Activated naive CD8-positive, alpha-beta T cell treated with anti-CD3 and anti-CD28 coated beads, Interleukin-2, amount 10 ng/mL, durations not matched to agents 7 days and 5 days (primary cell): ENCODE measurements at regions of chr5 and their contacts with region 1.

Region 1: GRCh38 chr5:151223469-151224264 is at the start of gene CCDC69:
- DNase-seq: peak; percentile 76
- ATAC-seq: peak; percentile 64
- H3K4me3 Mint-ChIP-seq: peak within 1 kb of the TSS; percentile 83
- H3K27ac Mint-ChIP-seq: peak within 1 kb of the TSS; percentile 82
- H3K4me1 Mint-ChIP-seq: peaks cover 45% of the 10 kb centered on the region
- H3K27me3 Mint-ChIP-seq: no peaks in the 10 kb centered on the region
- total RNA-seq, gene CCDC69: 108 to 110 TPM

Region 2: DNA sequence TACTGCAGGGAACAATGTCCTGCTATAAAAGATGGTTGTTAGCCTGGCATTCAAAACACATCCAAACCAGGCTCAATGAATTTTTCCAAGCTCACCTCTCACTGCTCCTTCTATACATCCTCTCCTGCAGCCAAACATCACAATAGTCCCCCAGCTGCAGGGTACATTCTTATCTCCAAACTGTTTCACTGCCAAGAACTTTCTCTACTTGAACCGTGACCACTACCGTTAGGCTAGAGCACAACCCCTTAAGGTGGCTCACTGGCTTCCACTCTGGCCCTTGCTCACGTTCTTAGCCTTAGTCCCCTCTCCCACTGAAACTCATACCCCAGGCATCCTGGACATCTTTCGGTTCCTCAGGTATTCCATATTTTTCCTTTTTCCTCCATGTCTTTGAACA is 37.1 kb before region 1 on chr5:
- POLR2A ChIA-PET with region 1: no interaction called
- DNase-seq: no peak
- ATAC-seq: no peak
- H3K4me3 Mint-ChIP-seq: no peak overlapping the region
- H3K27ac Mint-ChIP-seq: no peak overlapping the region
- H3K4me1 Mint-ChIP-seq: peaks cover 13% of the 10 kb centered on the region
- H3K27me3 Mint-ChIP-seq: no peaks in the 10 kb centered on the region

Region 3: GRCh38 chr5:151239237-151239861 is 15.7 kb after region 1 on chr5:
- POLR2A ChIA-PET with region 1: interaction called, 46 read pairs
- DNase-seq: peak; percentile 75
- ATAC-seq: peak; percentile 66
- H3K4me3 Mint-ChIP-seq: peak overlapping the region; percentile 68
- H3K27ac Mint-ChIP-seq: peak overlapping the region; percentile 76
- H3K4me1 Mint-ChIP-seq: peaks cover 32% of the 10 kb centered on the region
- H3K27me3 Mint-ChIP-seq: no peaks in the 10 kb centered on the region

Region 4: DNA sequence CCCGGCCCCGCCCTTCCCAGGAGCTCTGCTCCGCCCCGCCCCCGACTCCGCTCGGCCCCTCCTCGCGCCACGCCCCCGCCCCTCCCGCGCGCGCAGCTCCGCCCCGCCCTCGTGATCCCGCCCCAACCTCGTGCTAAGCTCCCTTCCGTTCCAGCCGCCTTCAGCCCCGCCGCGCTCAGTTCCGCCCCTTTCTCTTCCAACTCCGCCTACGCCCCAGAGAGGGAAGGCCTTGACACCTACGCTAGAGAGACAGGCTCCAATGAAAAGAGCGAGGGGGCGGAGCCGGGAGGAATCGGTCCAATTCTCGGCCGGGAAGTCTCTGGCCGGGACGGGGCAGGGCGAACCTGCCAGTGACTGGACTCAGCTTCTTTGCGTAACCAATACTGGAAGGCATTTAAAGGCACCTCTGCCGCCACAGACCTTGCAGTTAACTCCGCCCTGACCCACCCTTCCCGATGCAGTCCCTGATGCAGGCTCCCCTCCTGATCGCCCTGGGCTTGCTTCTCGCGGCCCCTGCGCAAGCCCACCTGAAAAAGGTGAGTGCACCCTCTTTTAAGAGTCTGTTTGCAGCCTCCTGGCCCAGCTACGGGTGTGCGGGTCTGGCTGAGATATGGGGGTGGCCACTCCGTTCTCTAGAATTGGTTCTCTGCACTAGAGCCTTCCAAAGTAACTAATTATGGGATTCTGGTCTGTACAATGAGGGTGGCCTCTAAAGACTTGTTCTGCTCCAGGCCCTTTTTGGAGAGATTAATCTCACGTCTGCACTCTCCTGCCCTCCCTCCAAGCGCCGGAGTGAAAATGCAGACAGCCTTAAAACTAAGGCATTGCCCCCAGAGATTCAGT is 29.3 kb after region 1 on chr5 and contains the start of gene GM2A:
- POLR2A ChIA-PET with region 1: interaction called, 16 read pairs
- DNase-seq: peak; percentile 95
- ATAC-seq: peak; percentile 96
- H3K4me3 Mint-ChIP-seq: peak within 1 kb of the TSS; percentile 95
- H3K27ac Mint-ChIP-seq: peak within 1 kb of the TSS; percentile 96
- H3K4me1 Mint-ChIP-seq: peaks cover 26% of the 10 kb centered on the region
- H3K27me3 Mint-ChIP-seq: no peaks in the 10 kb centered on the region
- total RNA-seq, gene GM2A: 19.3 to 20.6 TPM